Common myeloid progenitor, CD34-positive (primary cell): ENCODE measurements at regions of chr9 and their contacts with region 1.

Region 1: DNA sequence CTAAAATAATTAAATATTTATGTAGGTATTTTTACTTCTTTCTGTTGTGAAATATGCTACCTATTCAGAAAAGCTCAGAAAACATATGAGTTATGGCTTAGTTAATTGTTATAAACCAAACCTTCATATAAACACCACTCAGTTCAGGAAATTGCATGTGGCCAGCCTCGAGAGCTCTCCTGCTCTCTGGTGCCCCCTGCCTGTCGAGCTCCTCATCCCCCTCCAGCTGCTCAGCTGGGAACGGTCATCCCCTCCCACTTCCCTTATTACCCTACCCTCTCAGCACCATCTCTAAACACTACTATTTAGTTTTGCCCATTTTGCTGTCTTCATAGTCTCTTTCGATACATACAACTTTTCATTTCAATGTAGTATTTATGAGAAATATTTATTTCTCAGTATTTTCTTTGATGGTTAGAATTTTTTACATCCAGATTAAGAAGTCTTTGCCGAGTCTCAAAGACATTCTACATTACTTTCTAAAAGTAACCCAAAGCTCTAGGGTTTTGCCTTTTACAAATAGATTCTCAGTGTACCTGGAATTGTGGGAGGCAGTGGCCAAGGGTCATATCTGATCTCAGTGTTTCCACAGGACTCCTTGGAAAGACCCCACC is 51.2 kb upstream of the SEMA4D start:
- DNase-seq: peak; percentile 81 to 88 (median 83)
- H3K4me3 ChIP-seq: no peak overlapping the region
- H3K27ac ChIP-seq: no peak overlapping the region
- H3K4me1 ChIP-seq: peaks cover 0 to 21% (median 12%) of the 10 kb centered on the region in 4 experiments
- H3K27me3 ChIP-seq: no peaks in the 10 kb centered on the region

Region 2: GRCh38 chr9:89398621-89399020 is 150.5 kb before region 1 on chr9:
- CTCF ChIA-PET with region 1: interaction called, 14 read pairs
- POLR2A ChIA-PET with region 1: no interaction called
- DNase-seq: no peak
- H3K4me3 ChIP-seq: no peak overlapping the region
- H3K27ac ChIP-seq: no peak overlapping the region
- H3K4me1 ChIP-seq: peaks cover 14 to 46% (median 27%) of the 10 kb centered on the region in 4 experiments
- H3K27me3 ChIP-seq: no peaks in the 10 kb centered on the region

Region 3: GRCh38 chr9:89428901-89429890 is 119.9 kb before region 1 on chr9:
- CTCF ChIA-PET with region 1: interaction called, 106 read pairs
- POLR2A ChIA-PET with region 1: interaction called, 4 read pairs
- DNase-seq: peak; percentile 61 to 75 (median 64)
- H3K4me3 ChIP-seq: no peak overlapping the region
- H3K27ac ChIP-seq: no peak overlapping the region
- H3K4me1 ChIP-seq: peaks cover 13 to 78% (median 71%) of the 10 kb centered on the region in 4 experiments
- H3K27me3 ChIP-seq: no peaks in the 10 kb centered on the region

Region 4: GRCh38 chr9:89455356-89455824 is 93.7 kb before region 1 on chr9:
- CTCF ChIA-PET with region 1: interaction called, 16 read pairs
- POLR2A ChIA-PET with region 1: no interaction called
- DNase-seq: peak in 2 of 3 donors; percentile 70 to 81
- H3K4me3 ChIP-seq: peak overlapping the region in 1 of 7 experiments; percentile 40
- H3K27ac ChIP-seq: no peak overlapping the region
- H3K4me1 ChIP-seq: peaks cover 0 to 49% (median 42%) of the 10 kb centered on the region in 4 experiments
- H3K27me3 ChIP-seq: no peaks in the 10 kb centered on the region

Region 5: DNA sequence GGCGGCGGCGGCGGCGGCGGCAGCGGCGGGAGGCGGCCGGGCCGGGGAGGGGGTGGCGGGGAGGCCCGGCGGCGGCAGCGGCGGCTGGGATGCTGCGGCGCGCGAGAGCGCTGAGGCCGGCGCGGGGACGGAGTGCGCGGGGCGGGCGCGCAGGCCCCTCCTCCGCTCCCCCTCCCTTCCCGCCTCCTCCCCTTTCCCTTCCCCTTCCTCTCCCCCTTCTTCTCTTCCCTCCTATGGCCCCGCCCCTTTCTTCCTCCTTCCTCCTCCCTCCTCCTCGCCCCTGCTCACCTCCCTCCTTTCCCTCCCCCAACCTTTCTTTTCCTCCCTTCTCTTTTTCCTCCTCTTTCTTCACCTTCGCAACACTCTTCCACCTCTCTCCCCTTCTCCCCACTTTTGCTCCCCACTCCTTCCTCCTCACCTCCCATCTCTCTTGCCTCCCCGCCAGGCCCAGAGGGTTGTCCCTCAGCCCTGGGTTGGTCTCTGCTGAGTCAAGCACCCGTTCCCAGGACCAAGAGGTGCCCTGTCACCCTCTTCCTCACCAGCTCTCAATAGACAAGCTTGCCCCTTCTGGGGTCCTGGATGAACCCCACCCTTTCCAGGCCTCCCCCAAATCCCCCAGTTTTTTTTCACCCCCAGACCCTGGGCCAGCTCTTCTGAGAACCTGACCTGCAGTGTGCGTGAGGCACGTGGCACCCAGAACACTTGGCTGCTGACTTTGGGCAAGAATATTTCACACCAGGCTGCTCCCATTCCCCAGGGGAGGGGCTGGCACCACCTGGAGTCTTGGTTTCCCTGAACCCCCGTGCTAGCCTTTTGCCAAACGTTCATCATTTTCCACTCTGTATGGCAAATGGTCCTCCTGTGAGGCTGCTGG is 50.9 kb before region 1 on chr9 and contains the start of gene SEMA4D:
- CTCF ChIA-PET with region 1: interaction called, 23 read pairs
- POLR2A ChIA-PET with region 1: no interaction called
- DNase-seq: peak; percentile 55 to 78 (median 61)
- H3K4me3 ChIP-seq: peak within 1 kb of the TSS; percentile 61 to 82 (median 78)
- H3K27ac ChIP-seq: peak within 1 kb of the TSS; percentile 47 to 76
- H3K4me1 ChIP-seq: peaks cover 10 to 82% (median 74%) of the 10 kb centered on the region in 4 experiments
- H3K27me3 ChIP-seq: no peaks in the 10 kb centered on the region

Region 6: DNA sequence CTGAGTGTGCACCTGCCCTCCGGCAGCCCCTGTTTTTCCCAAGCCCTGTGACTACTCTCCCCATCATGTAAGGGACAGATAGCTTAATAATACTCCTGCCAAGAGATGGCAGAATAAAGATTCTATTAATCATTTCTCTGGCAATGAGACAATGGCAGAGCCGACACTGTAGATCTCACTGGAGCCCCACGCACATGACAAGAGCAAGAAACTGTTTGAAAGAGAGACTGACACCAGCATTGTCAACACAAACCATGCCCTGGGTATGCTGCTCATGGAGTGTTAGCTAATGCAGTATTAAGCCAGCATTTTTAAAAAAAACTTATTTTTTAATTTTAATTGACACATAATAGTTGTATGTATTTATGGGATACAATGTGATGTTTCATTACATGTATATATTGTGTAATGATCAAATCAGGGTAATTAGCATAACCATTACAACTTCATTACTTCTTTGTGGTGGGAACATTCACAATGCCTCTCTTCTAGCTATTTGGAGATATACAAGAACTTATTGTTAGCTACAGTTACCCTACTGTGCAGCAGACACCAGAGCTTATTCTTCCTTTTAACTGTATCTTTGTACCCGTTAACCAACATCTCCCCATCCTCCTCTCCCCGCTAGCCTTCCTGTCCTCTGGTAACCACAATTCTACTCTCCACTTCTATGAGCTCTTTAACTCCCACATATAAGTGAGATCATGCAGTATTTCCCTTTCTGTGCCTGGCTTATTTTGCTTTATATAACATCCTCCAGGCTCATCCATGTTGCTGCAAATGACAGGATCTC is 19.7 kb before region 1 on chr9:
- CTCF ChIA-PET with region 1: interaction called, 41 read pairs
- POLR2A ChIA-PET with region 1: no interaction called
- DNase-seq: peak in 2 of 3 donors; percentile 51 to 64
- H3K4me3 ChIP-seq: peak overlapping the region in 1 of 7 experiments; percentile 11
- H3K27ac ChIP-seq: no peak overlapping the region
- H3K4me1 ChIP-seq: peaks cover 14 to 86% (median 40%) of the 10 kb centered on the region in 4 experiments
- H3K27me3 ChIP-seq: no peaks in the 10 kb centered on the region

Region 7: DNA sequence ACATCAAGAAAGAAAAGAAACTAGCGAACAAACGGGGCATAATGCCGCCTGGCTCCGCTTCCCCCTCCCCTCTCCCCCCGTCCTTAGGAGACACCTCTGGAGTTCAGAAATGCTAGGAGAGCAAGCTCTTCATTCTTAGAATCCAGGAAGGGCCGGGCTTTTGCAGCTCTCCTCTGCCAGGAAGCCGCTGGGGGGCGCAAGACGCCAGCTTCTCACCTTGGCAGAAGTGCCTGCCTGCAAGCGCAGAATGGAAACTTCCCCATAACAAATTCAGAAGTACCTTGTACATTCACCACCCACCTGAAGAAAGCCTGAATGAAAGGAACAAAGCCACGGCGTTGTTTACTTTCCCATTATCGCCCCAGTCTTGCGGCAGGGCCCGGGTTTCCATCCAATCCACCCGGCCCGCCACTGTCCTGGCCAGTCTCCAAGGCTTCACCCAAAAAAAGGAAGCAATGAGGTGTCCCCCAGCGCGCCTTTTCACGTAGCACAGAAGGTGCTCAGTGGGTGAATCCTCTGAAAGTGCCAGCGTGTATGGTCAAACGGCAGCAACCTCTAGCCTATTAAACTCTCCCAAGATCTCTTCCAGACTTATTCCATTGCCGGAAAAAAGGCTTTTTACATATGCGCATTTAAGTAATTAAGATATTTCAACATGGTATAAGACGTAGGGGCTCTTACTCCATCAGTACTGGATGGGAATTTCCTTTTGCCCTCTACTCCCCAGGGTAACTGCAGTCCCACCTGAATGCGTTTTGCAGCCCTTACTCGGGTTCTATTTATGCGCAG is 54.0 kb after region 1 on chr9:
- CTCF ChIA-PET with region 1: no interaction called
- POLR2A ChIA-PET with region 1: no interaction called
- DNase-seq: peak; percentile 88
- H3K4me3 ChIP-seq: peak overlapping the region in 6 of 7 experiments; percentile 43 to 73 (median 64)
- H3K27ac ChIP-seq: no peak overlapping the region
- H3K4me1 ChIP-seq: peaks cover 12 to 46% (median 41%) of the 10 kb centered on the region in 4 experiments
- H3K27me3 ChIP-seq: peaks cover 0 to 14% (median 0%) of the 10 kb centered on the region in 5 experiments

Region 8: DNA sequence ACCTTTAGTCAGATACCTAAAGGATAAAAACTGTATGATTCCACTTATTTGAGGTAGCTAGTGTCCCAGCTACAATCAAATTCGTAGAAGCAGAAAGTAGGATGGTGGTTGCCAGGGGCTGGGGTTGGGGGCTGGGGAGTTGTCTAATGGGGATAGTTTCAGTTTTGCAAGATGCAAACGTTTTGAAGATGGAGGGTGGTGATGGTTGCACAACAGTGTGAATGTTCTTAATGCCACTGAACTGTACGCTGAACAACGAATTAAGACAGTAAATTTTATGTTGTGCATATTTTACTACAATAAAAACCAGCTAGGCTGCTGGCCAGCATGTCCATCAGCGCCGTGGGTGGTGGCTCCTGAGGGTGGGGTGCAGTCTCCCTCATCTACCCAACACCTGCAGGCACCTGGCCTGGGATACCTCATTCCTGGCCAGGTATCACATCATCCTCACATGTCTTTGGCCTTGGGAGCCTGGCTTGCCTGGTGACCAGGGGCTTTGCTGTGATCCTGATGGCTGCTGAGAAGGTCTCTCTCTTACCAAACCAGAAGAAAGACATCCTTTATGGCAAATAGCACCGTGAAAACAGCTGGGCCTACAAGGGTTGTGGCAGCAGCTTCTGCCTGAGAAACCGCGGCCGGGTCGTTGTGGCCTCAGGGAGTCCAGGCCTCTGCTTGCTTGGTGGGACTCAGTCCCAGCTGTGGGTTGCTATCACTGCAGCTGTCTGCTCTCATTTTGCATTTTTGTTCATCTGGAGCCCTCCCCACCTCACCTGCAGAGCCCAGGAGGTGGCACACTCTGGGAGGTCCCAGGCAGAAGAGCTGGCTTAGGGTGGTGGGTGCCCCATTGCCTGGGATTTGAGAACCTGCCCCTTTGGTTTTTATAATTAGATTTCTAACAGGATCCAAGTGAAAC is 193.8 kb after region 1 on chr9:
- CTCF ChIA-PET with region 1: no interaction called
- POLR2A ChIA-PET with region 1: no interaction called
- DNase-seq: peak in 2 of 3 donors; percentile 25 to 42
- H3K4me3 ChIP-seq: no peak overlapping the region
- H3K27ac ChIP-seq: no peak overlapping the region
- H3K4me1 ChIP-seq: peaks cover 2 to 28% (median 19%) of the 10 kb centered on the region in 4 experiments
- H3K27me3 ChIP-seq: no peaks in the 10 kb centered on the region